ENCODE measurements at regions of chr1 and their contacts with region 1.

Region 1: GRCh38 chr1:150696590-150697524 is at the start of gene GOLPH3L:
- DNase-seq: peak; percentile 100
- H3K4me3 Mint-ChIP-seq: peak within 1 kb of the TSS; percentile 88
- H3K27ac Mint-ChIP-seq: peak within 1 kb of the TSS; percentile 95
- H3K4me1 Mint-ChIP-seq: peaks cover 25% of the 10 kb centered on the region
- H3K27me3 Mint-ChIP-seq: no peaks in the 10 kb centered on the region
- CTCF ChIP-seq: no peak
- total RNA-seq, gene GOLPH3L: 68.5 and 76.9 TPM in 2 replicates

Region 2: GRCh38 chr1:150578965-150579798 is 117.7 kb before region 1 on chr1 and contains the start of gene MCL1:
- CTCF ChIA-PET with region 1: no interaction called
- POLR2A ChIA-PET with region 1: interaction called, 56 read pairs
- intact Hi-C with region 1: loop called (anchors 5 kb)
- DNase-seq: peak; percentile 98
- H3K4me3 Mint-ChIP-seq: peak within 1 kb of the TSS; percentile 99
- H3K27ac Mint-ChIP-seq: peak within 1 kb of the TSS; percentile 99
- H3K4me1 Mint-ChIP-seq: peaks cover 35% of the 10 kb centered on the region
- H3K27me3 Mint-ChIP-seq: no peaks in the 10 kb centered on the region
- CTCF ChIP-seq: no peak
- total RNA-seq, gene MCL1: 497 and 624 TPM in 2 replicates

Region 3: DNA sequence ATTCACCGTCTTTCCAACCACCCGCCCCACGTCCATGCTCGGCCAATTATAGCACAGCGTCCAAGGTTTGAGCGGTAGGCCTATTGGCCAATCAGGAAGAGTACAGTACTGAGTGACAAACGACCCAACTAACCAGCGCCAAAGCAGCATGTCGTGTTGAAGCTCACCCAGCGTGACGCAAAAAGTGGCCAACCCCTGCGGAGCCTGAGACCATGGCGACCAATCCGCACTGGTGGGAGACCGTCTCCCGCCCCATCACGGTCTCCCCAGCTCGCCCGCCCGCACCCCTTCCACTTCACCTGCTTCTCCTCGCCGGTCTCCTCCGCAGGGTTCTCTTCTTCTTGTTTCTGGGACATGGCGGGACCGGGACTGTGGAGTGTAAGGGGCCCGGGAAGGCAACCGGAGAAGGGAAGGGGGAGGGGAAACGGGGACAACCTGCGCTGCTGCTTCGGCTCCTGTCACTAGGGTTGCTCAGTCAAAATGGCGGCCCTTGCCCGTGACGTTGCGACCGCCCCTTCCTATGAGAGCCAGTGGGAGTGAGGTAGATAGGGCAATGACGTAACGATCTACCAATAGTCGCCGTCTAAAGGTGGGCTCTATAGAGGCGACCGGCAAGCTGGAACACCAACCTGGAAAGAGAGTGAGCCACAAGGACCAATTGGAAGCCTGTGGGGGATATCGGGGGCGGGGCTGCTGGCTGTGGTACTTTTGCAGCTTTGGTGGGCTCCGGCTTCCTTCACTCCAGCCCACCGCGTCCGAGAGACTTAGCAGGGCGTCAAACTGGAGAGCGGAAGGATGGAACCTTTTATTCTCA is 67.5 kb before region 1 on chr1 and contains the start of gene ENSA:
- CTCF ChIA-PET with region 1: interaction called, 4 read pairs
- POLR2A ChIA-PET with region 1: interaction called, 26 read pairs
- intact Hi-C with region 1: loop called (anchors 2 kb)
- DNase-seq: peak; percentile 100
- H3K4me3 Mint-ChIP-seq: no peak within 1 kb of the TSS
- H3K27ac Mint-ChIP-seq: no peak within 1 kb of the TSS
- H3K4me1 Mint-ChIP-seq: peaks cover 44% of the 10 kb centered on the region
- H3K27me3 Mint-ChIP-seq: no peaks in the 10 kb centered on the region
- CTCF ChIP-seq: no peak
- total RNA-seq, gene ENSA: 261 and 294 TPM in 2 replicates

Region 4: GRCh38 chr1:150686275-150686674 is 10.6 kb before region 1 on chr1:
- CTCF ChIA-PET with region 1: interaction called, 4 read pairs
- POLR2A ChIA-PET with region 1: interaction called, 17 read pairs
- intact Hi-C with region 1: no loop called
- DNase-seq: no peak
- H3K4me3 Mint-ChIP-seq: no peak overlapping the region
- H3K27ac Mint-ChIP-seq: no peak overlapping the region
- H3K4me1 Mint-ChIP-seq: peaks cover 6% of the 10 kb centered on the region
- H3K27me3 Mint-ChIP-seq: no peaks in the 10 kb centered on the region
- CTCF ChIP-seq: no peak

Region 5: GRCh38 chr1:150730130-150730721 is 33.4 kb after region 1 on chr1:
- CTCF ChIA-PET with region 1: no interaction called
- POLR2A ChIA-PET with region 1: no interaction called
- intact Hi-C with region 1: no loop called
- DNase-seq: no peak
- H3K4me3 Mint-ChIP-seq: no peak overlapping the region
- H3K27ac Mint-ChIP-seq: no peak overlapping the region
- H3K4me1 Mint-ChIP-seq: no peaks in the 10 kb centered on the region
- H3K27me3 Mint-ChIP-seq: no peaks in the 10 kb centered on the region
- CTCF ChIP-seq: no peak

Region 6: GRCh38 chr1:150765296-150765976 is 68.6 kb after region 1 on chr1 and contains the start of gene CTSS:
- CTCF ChIA-PET with region 1: no interaction called
- POLR2A ChIA-PET with region 1: interaction called, 16 read pairs
- intact Hi-C with region 1: no loop called
- DNase-seq: peak; percentile 8
- H3K4me3 Mint-ChIP-seq: peak within 1 kb of the TSS; percentile 58
- H3K27ac Mint-ChIP-seq: peak within 1 kb of the TSS; percentile 96
- H3K4me1 Mint-ChIP-seq: peaks cover 21% of the 10 kb centered on the region
- H3K27me3 Mint-ChIP-seq: no peaks in the 10 kb centered on the region
- CTCF ChIP-seq: no peak
- total RNA-seq, gene CTSS: 0.75 and 0.86 TPM in 2 replicates

Region 7: DNA sequence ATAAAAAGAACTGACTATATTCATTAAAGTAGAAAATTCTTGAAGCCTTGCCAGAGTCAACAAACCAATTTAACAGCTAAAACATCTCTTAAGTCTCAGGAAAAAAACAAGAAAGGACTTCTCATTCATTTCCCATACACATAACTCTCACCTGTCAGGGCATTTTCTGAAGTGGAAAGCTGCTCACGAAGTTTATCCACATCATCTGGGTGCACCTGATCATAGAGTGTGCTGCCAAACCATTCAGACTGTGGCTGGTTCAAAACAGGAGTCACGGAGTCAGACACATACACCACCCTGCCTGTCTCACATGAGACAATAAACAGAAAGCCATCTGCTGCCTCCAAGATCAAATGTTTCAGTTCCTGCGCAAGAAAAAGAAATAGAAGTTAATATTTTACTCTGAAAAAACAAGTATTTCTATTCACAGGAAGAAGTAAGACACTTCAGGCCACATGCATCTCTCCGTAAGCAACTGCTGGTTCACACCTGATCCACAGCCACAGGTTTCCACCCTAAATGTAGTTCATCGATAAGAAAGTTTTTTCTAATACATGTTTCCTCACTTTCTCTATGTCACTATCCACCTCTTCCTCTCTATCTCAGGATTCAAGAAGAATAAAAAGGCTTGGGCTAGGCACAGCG is 139.4 kb after region 1 on chr1:
- CTCF ChIA-PET with region 1: no interaction called
- POLR2A ChIA-PET with region 1: no interaction called
- intact Hi-C with region 1: no loop called
- DNase-seq: no peak
- H3K4me3 Mint-ChIP-seq: no peak overlapping the region
- H3K27ac Mint-ChIP-seq: no peak overlapping the region
- H3K4me1 Mint-ChIP-seq: no peaks in the 10 kb centered on the region
- H3K27me3 Mint-ChIP-seq: no peaks in the 10 kb centered on the region
- CTCF ChIP-seq: no peak